AG04450 (cell line): ENCODE measurements at regions of chr1 and their contacts with region 1.

Region 1: GRCh38 chr1:23559136-23559984 is at the start of gene ID3:
- DNase-seq: peak; percentile 88
- H3K4me3 ChIP-seq: peak within 1 kb of the TSS; percentile 86
- H3K27ac ChIP-seq: peak within 1 kb of the TSS; percentile 98
- H3K27me3 ChIP-seq: no peaks in the 10 kb centered on the region
- CTCF ChIP-seq: no peak
- polyA plus RNA-seq, gene ID3: 15.3 and 25.0 TPM in 2 replicates

Region 2: GRCh38 chr1:23539698-23540266 is 19.6 kb before region 1 on chr1:
- CTCF ChIA-PET with region 1: interaction called, 14 read pairs
- POLR2A ChIA-PET with region 1: no interaction called
- DNase-seq: peak; percentile 70
- H3K4me3 ChIP-seq: no peak overlapping the region
- H3K27ac ChIP-seq: no peak overlapping the region
- H3K27me3 ChIP-seq: no peaks in the 10 kb centered on the region
- CTCF ChIP-seq: peak; percentile 96

Region 3: DNA sequence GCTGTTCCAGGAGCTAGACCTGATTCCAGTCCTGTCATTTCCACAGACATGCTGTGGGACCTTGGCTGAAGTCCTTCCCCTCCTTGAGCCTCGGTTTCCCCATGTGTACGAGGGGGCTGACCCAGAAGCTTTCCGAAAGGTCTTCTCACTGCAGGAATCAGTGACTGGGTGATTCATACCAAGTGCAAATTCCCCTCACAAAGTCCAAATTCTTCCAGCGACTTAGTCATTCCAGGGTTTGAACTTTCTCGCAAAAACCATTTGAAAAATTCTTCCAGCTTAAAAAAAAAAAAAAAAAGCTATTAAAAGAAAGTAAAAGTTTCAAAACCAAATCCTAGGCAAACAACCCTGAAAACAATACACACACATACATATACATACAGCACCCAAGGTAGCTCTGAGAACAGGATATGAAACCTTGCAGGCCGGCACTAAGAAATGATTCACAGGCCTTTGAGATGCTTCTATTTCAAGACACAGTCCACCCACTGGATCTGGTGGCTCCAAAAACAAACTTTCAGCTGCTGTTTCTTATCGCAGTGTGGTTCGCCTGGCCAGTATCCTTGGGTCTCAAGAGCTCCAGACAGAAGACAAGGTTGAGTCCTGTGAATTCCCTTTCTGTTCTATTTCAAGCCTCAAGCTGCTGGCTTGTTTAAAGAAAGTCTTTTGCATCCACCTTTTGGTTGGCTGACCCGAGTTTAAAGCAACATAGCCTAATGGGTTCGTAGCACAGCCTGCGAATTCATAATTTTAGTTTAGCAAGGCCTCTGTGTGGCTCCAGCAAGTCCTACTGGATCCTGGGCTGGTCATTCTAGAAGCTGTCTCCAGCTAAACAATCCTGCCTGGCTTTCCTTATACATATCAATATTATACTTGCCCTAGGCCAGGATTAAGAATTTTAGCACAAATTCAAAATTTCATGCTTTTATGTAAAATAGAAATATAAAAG is 18.0 kb after region 1 on chr1:
- CTCF ChIA-PET with region 1: interaction called, 10 read pairs
- POLR2A ChIA-PET with region 1: interaction called, 57 read pairs
- DNase-seq: peak; percentile 67
- H3K4me3 ChIP-seq: peak overlapping the region; percentile 23; the same call in 1 of the 2 replicates
- H3K27ac ChIP-seq: peak overlapping the region; percentile 93
- H3K27me3 ChIP-seq: no peaks in the 10 kb centered on the region
- CTCF ChIP-seq: no peak

Region 4: DNA sequence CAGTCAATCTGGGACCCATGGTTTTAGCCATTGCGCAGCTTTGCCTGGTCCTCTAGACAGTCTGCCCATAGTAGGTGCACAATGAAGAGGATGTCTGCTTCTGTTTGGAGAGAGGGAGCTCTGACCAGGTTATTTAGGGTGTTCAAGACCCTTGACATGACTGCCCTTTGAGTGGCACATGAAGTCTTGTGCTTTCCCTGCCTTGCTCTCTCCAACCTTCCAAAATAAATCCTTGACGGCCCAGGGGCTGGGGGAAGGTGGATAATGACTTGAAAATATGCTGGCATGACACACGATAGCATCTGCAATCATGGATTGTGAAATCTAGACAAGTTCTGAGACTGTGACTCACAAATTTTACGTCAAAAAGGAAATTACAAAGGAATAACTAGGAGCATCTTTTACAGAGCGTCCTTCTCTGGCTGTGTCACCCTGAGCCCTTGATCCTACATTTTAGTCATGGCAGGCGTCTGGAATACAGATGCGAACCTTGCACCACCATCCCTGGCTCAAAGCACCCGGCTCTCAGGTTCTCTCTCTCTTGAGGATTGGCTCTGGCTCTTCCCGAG is 26.2 kb after region 1 on chr1:
- CTCF ChIA-PET with region 1: interaction called, 4 read pairs
- POLR2A ChIA-PET with region 1: interaction called, 22 read pairs
- DNase-seq: peak; percentile 84
- H3K4me3 ChIP-seq: no peak overlapping the region
- H3K27ac ChIP-seq: peak overlapping the region; percentile 95
- H3K27me3 ChIP-seq: no peaks in the 10 kb centered on the region
- CTCF ChIP-seq: no peak

Region 5: GRCh38 chr1:23691499-23692307 is 132.3 kb after region 1 on chr1 and contains the start of gene RPL11:
- CTCF ChIA-PET with region 1: no interaction called
- POLR2A ChIA-PET with region 1: interaction called, 10 read pairs
- DNase-seq: peak; percentile 94
- H3K4me3 ChIP-seq: peak within 1 kb of the TSS; percentile 91
- H3K27ac ChIP-seq: peak within 1 kb of the TSS; percentile 87
- H3K27me3 ChIP-seq: no peaks in the 10 kb centered on the region
- CTCF ChIP-seq: peak; percentile 80
- polyA plus RNA-seq, gene RPL11: 1,898 and 2,055 TPM in 2 replicates